Activated CD4-positive, alpha-beta memory T cell treated with anti-CD3 and anti-CD28 coated beads for 36 hours (primary cell): ENCODE measurements at regions of chr6 and their contacts with region 1.

Region 1: DNA sequence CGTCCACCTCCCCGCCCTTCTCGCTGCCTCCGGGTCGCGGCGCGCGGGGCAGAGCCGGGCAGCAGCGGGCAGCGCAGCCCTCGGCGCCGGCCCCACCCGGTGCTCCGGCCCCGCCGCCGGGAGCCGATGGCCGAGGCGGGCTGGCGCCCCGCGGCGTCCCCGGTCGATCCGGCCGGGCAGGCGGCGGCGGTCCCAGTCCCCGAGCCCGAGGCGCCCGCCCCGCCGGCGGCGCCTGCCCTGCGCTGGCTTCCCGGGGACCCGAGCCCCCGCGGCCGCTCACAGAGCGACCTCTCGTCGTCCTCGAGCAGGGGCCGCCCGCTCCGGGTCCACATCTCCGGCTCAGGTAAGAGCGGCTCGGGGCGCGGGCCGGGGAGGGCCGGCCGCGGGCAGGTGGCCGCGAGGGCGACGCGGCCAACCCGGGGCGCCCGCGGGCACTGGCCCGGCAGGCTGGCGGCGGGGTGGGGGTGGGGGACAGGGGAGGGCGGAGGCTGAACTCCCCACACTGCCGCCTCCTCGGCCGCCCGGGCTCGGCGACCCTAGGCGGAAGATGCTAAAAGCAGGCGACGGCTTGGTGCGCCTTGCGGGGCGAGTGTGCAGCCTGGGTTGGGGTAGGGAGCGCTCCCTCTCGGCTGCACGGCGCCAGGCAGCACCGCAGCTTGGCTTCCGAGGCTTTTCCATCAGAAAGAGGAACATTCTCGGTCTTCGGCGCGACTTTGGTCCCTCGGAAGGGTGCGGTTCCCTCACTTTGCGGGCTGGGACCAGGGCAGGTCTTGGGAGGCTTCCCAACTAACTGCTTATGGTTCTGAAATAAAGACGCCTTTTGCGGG is 25.6 kb upstream of the FUCA2 start:
- DNase-seq: peak; percentile 73
- H3K4me3 Mint-ChIP-seq: peak overlapping the region; percentile 85
- H3K27ac Mint-ChIP-seq: peak overlapping the region; percentile 80
- H3K4me1 Mint-ChIP-seq: peaks cover 39% of the 10 kb centered on the region
- H3K27me3 Mint-ChIP-seq: no peaks in the 10 kb centered on the region

Region 2: DNA sequence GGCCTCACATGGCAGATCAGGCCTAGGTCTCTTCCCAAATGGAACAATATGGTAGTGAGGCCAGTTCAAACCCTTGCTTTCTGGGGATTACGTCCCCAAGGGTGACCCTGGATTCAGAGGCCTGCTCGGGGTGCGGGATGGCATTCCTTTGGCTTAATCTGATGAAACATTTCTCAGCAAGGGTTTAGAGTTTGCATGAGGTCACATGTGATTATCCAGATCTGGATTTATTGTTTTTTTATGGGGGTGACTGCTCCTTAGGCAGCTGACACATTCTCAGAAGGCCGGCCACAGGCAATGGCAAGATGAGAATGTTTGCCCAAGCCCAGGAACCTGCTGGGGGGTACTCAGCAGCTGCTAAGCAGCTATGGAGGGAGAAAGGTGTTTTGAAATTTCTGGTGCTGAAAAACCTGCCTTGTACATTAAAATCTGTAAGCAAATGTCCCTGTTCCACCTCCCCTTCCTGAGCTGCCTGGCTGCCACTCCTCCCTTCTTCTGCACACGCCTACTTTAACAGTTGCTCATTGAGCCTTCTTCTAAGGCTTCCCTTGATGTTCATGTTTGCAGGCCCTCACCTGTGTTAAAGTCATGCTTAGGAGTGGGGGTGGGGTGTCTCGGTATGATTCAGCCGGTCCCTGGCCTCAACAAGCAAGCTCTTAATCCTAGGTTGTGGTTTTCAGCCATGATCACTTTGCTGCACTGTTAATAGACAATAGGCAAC is 12.3 kb after region 1 on chr6:
- CTCF ChIA-PET with region 1: interaction called, 4 read pairs
- POLR2A ChIA-PET with region 1: interaction called, 11 read pairs
- intact Hi-C with region 1: loop called (anchors 1 kb)
- DNase-seq: peak; percentile 83
- H3K4me3 Mint-ChIP-seq: no peak overlapping the region
- H3K27ac Mint-ChIP-seq: peak overlapping the region; percentile 63
- H3K4me1 Mint-ChIP-seq: peaks cover 90% of the 10 kb centered on the region
- H3K27me3 Mint-ChIP-seq: no peaks in the 10 kb centered on the region

Region 3: DNA sequence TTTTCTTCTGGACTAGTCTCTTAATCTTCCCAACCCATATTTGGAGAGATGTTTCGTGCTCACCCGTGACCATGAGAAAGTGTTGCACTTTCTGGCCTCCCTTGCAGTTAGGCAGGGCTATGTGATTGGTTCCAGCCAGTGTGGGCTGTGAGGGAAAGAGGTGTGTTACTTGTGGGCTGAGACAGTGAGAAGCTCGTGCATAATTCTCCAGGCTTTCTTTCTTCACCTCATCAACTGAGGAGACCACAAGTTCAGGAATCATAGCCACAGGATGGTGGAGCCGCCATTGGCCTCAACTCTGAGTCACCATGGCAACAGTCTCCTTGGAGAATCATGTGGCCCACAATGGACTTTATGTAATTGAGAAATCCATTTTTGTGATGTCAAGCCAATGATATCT is 32.0 kb after region 1 on chr6:
- CTCF ChIA-PET with region 1: interaction called, 5 read pairs
- POLR2A ChIA-PET with region 1: interaction called, 3 read pairs
- intact Hi-C with region 1: loop called (anchors 1 kb)
- DNase-seq: peak; percentile 13
- H3K4me3 Mint-ChIP-seq: no peak overlapping the region
- H3K27ac Mint-ChIP-seq: no peak overlapping the region
- H3K4me1 Mint-ChIP-seq: peaks cover 43% of the 10 kb centered on the region
- H3K27me3 Mint-ChIP-seq: no peaks in the 10 kb centered on the region

Region 4: DNA sequence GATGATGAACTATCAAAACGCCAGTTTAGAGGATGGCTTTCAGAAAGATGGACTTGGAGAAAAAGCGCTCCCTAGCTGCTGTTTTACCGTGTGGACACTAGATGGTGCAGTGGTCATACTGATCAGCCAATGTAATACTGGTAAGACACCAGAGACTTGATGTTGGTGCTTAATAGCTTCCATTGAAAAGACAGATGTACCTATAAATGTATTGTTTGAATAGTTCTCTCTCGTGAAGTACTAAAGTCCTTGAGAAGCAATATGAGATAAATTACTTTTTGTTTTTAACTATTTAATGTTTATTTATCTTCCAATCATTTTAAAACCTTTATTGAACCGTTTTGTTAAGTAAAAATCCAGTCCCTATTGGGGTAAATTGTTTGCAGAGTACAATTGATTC is 38.4 kb after region 1 on chr6:
- CTCF ChIA-PET with region 1: interaction called, 14 read pairs
- POLR2A ChIA-PET with region 1: no interaction called
- intact Hi-C with region 1: no loop called
- DNase-seq: peak; percentile 56
- H3K4me3 Mint-ChIP-seq: no peak overlapping the region
- H3K27ac Mint-ChIP-seq: no peak overlapping the region
- H3K4me1 Mint-ChIP-seq: peaks cover 10% of the 10 kb centered on the region
- H3K27me3 Mint-ChIP-seq: no peaks in the 10 kb centered on the region

Region 5: DNA sequence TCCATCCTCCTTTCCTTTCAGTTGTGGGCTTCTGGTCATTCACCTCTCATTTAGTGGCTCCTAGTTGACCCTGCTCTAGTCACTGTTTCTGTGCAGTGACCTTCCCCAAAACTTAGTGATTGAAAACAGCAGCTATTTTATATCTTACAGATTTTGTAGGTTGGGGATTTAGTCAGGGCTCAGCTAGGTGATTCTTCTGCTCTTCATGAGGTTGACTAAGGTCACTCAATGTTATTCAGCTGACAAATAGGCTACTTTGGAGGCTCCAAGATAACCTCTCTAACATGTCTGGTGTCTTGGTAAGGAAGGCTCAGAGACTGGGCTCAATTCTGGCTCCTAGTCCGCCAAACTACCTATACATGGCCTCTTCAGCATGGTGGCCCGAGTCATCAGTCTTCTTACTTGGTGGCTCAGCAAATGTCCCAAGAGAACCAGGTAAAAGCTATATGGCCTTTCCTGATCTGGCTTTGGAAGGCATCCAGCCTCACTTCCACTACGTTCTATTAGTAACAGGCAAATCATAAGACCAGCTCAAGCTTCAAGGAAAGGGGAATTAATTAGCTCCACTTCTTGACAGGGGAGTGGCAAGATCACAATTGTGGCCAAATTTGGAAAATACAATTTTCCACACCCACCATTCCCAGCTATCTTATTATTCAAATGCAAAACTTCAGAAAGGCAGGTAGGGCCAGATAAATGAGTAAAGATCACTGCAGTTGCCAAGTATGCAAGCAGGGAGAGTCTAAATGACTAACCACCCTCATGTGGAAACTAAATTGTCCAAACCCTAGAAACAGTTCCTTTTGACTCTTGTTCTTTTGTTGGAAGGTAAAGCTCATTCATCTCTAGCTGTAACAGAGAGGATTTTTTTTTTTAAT is 255.6 kb after region 1 on chr6:
- CTCF ChIA-PET with region 1: no interaction called
- POLR2A ChIA-PET with region 1: no interaction called
- intact Hi-C with region 1: no loop called
- DNase-seq: no peak
- H3K4me3 Mint-ChIP-seq: no peak overlapping the region
- H3K27ac Mint-ChIP-seq: no peak overlapping the region
- H3K4me1 Mint-ChIP-seq: no peaks in the 10 kb centered on the region
- H3K27me3 Mint-ChIP-seq: no peaks in the 10 kb centered on the region

Region 6: DNA sequence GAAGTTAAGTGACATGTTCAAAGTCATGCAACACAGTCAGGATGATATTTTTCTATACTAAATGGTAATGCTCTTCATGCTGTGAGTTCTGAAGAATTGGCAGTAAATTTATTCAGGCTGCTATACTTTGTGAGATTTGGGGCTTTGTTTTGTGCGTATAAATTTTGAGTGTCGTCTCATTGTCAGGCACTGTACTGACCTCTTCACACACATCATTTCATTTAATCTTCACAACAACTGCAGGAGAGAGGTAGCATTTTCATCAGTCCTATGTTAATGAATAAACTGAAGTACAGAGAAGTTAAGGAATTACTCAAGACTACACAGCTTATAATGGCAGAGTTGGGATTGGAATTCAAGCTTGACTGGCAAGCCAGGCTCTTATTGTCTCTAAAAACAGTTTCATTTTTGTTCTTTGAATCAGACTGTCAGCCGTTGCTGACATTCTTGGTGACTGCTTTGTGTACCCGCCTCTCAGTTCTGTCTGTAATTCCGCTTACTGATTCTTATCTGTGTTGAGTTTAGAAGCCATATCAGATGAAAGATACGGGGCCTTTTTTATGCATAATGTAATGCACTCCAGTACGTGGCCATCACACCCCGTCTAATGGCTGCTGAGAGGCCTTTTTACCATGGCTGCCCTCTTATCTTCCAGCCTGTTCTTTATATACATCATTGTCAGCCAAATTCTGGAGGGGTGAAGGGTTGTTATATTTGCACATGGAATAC is 1023.0 kb after region 1 on chr6:
- CTCF ChIA-PET with region 1: no interaction called
- POLR2A ChIA-PET with region 1: no interaction called
- intact Hi-C with region 1: loop called (anchors 5 kb)
- DNase-seq: peak; percentile 45
- H3K4me3 Mint-ChIP-seq: peak overlapping the region; percentile 56
- H3K27ac Mint-ChIP-seq: peak overlapping the region; percentile 82
- H3K4me1 Mint-ChIP-seq: peaks cover 34% of the 10 kb centered on the region
- H3K27me3 Mint-ChIP-seq: no peaks in the 10 kb centered on the region